AG04449 (cell line): ENCODE measurements at regions of chr10 and their contacts with region 1.

Region 1: GRCh38 chr10:35635576-35635975 is 6.5 kb downstream of the FZD8 start:
- DNase-seq: no peak
- H3K4me3 ChIP-seq: no peak overlapping the region
- CTCF ChIP-seq: peak; percentile 74

Region 2: GRCh38 chr10:36771725-36772124 is 1136.1 kb after region 1 on chr10:
- CTCF ChIA-PET with region 1: interaction called, 22 read pairs
- POLR2A ChIA-PET with region 1: no interaction called
- DNase-seq: no peak
- H3K4me3 ChIP-seq: no peak overlapping the region
- CTCF ChIP-seq: no peak

Region 3: GRCh38 chr10:36779234-36779846 is 1143.8 kb after region 1 on chr10:
- CTCF ChIA-PET with region 1: interaction called, 236 read pairs
- POLR2A ChIA-PET with region 1: no interaction called
- DNase-seq: peak; percentile 41
- H3K4me3 ChIP-seq: no peak overlapping the region
- CTCF ChIP-seq: peak; percentile 65

Region 4: DNA sequence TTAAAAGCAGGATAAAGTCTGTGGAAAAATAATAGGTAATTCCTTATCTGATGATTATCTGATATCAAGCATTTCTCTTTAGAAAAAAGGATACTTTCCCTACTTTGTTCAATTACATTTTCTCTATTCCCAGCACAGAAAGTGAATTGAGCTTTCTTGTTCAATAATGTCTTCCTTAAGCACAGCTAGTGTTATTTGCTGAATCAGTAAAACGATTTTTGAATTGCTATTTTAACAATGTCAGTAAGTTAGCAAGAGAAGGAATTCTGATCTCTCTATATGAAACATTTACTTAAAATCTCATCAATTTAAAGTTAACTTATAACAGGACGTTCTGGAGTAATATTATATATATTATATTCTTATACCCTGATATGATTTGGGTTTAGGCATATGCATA is 1152.6 kb after region 1 on chr10:
- CTCF ChIA-PET with region 1: interaction called, 236 read pairs
- POLR2A ChIA-PET with region 1: no interaction called
- DNase-seq: no peak
- H3K4me3 ChIP-seq: no peak overlapping the region
- CTCF ChIP-seq: no peak